AG04450 (cell line): ENCODE measurements at regions of chr1 and their contacts with region 1.

Region 1: GRCh38 chr1:156233426-156234127 is 8.4 kb upstream of the BGLAP start:
- DNase-seq: peak; percentile 61
- H3K4me3 ChIP-seq: no peak overlapping the region
- H3K27ac ChIP-seq: peak overlapping the region; percentile 94
- H3K27me3 ChIP-seq: no peaks in the 10 kb centered on the region
- CTCF ChIP-seq: no peak

Region 2: GRCh38 chr1:155831279-155831976 is 402.1 kb before region 1 on chr1:
- CTCF ChIA-PET with region 1: no interaction called
- POLR2A ChIA-PET with region 1: no interaction called
- DNase-seq: no peak
- H3K4me3 ChIP-seq: no peak overlapping the region
- H3K27ac ChIP-seq: no peak overlapping the region
- H3K27me3 ChIP-seq: no peaks in the 10 kb centered on the region
- CTCF ChIP-seq: no peak

Region 3: DNA sequence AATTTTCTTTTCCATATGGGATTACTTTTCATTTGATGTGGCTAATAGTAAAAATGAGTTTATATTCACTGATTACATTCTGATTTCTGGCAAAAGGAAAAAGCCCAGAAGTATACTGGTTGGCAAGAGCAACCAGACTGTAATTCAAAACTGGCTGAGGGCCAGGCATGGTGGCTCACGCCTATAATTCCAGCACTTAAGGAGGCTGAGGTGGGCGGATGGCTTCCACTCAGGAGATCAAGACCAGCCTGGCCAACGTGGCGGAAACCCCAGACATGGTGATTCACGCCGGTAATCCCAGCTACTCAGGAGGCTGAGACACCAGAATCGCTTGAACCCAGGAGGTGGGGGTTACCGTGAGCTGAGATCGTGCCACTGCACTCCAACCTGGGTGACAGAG is 359.7 kb before region 1 on chr1:
- CTCF ChIA-PET with region 1: no interaction called
- POLR2A ChIA-PET with region 1: no interaction called
- DNase-seq: no peak
- H3K4me3 ChIP-seq: no peak overlapping the region
- H3K27ac ChIP-seq: no peak overlapping the region
- H3K27me3 ChIP-seq: no peaks in the 10 kb centered on the region
- CTCF ChIP-seq: no peak

Region 4: GRCh38 chr1:156146020-156146768 is 87.4 kb before region 1 on chr1:
- CTCF ChIA-PET with region 1: interaction called, 18 read pairs
- POLR2A ChIA-PET with region 1: interaction called, 3 read pairs
- DNase-seq: peak; percentile 86
- H3K4me3 ChIP-seq: no peak overlapping the region
- H3K27ac ChIP-seq: no peak overlapping the region
- H3K27me3 ChIP-seq: peaks cover 13% of the 10 kb centered on the region
- CTCF ChIP-seq: peak; percentile 64

Region 5: GRCh38 chr1:156200044-156200443 is 33.5 kb before region 1 on chr1:
- CTCF ChIA-PET with region 1: no interaction called
- POLR2A ChIA-PET with region 1: no interaction called
- DNase-seq: no peak
- H3K4me3 ChIP-seq: no peak overlapping the region
- H3K27ac ChIP-seq: no peak overlapping the region
- H3K27me3 ChIP-seq: no peaks in the 10 kb centered on the region
- CTCF ChIP-seq: no peak